GM12878 (cell line): ENCODE measurements at regions of chr15 and their contacts with region 1.

Region 1: DNA sequence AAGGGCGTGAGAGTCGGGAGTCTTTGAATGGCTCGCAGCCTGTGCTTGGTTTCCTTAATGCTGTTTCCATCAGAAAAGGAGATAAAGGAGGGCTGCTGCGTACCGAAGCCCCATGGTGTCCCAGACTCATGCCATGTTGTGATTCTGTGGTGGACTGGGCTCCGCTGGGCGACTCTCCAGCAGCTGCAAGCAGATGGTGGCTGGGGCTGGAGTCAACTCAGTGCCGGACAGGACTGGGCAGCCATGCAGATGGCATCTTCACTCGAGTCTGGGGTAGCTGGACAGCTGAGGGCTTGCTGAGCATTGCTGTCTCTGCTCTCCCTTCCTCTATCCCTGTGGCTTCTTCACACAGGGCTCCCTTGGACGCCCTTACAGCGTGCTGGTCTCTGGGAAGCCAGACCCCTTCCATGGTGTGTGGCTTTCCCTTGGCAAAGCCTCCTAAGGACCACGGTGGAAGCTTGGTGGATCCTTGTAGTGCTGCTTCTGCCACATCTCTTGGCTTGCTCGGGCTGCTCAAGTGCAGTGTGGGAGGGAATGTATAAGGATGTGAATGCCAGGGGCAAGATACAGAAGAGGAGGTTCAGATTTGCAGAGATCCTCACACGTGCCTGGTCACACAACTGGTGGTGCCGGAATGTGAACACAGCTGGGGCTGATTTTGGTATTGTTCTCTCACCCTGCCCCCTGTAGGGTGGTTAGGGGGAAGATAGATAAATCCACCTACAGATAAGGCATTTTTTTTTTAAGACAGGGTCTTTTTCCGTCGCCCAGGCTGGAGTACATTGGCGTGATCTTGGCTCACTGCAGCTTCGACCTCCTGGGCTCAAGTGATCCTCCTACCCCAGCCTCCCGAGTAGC is 9.0 kb downstream of the NIPA1 start:
- DNase-seq: no peak
- ATAC-seq: no peak
- H3K4me3 ChIP-seq: peak overlapping the region; percentile 47; the same call in 1 of the 2 replicates
- H3K27ac ChIP-seq: peak overlapping the region; percentile 98
- H3K4me1 ChIP-seq: peaks cover 31% of the 10 kb centered on the region
- H3K27me3 ChIP-seq: no peaks in the 10 kb centered on the region
- CTCF ChIP-seq: no peak
- EP300 ChIP-seq: no peak
- POLR2A ChIP-seq: no peak
- RAD21 ChIP-seq: no peak

Region 2: GRCh38 chr15:22780267-22780666 is 15.2 kb before region 1 on chr15:
- CTCF ChIA-PET with region 1: interaction called, 3 read pairs
- POLR2A ChIA-PET with region 1: interaction called, 7 read pairs
- RAD21 ChIA-PET with region 1: interaction called, 10 read pairs
- SMC1A ChIA-PET with region 1: interaction called, 5 read pairs
- in situ Hi-C with region 1: no loop called
- intact Hi-C with region 1: loop called (anchors 2 kb)
- DNase-seq: no peak
- ATAC-seq: peak; percentile 88
- H3K4me3 ChIP-seq: no peak overlapping the region
- H3K27ac ChIP-seq: no peak overlapping the region
- H3K4me1 ChIP-seq: peaks cover 30% of the 10 kb centered on the region
- H3K27me3 ChIP-seq: no peaks in the 10 kb centered on the region
- CTCF ChIP-seq: no peak
- EP300 ChIP-seq: 0 out of 4 replicates have a peak, but pooled peaks of 1 of the 2 experiments have one; percentile 19
- POLR2A ChIP-seq: no peak
- RAD21 ChIP-seq: no peak

Region 3: DNA sequence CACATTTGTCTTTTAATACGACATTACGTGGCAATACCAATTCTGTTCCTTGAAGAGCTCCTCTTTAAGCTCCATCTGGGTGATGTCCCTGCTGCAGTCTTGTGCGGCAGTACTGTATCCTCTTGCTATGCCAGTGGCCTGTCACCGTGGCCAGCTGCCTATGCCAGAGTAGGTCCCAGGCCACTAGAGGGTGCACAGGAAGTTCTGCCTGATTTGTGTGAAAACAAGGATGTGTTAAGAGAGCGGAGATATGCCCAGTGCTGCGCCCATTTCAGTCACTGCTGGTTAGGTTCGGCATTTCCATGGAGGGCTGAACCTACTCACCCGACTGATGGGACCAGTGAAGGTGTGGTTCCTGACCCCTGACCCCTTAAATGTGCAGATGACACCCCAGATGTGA is 16.2 kb after region 1 on chr15:
- CTCF ChIA-PET with region 1: interaction called, 3 read pairs
- POLR2A ChIA-PET with region 1: interaction called, 4 read pairs
- RAD21 ChIA-PET with region 1: no interaction called
- SMC1A ChIA-PET with region 1: interaction called, 18 read pairs
- in situ Hi-C with region 1: no loop called
- intact Hi-C with region 1: no loop called
- DNase-seq: no peak
- ATAC-seq: peak; percentile 56
- H3K4me3 ChIP-seq: no peak overlapping the region
- H3K27ac ChIP-seq: no peak overlapping the region
- H3K4me1 ChIP-seq: peaks cover 21% of the 10 kb centered on the region
- H3K27me3 ChIP-seq: no peaks in the 10 kb centered on the region
- CTCF ChIP-seq: peak; percentile 21 to 35 (median 34); a peak in 4 of 6 replicates
- EP300 ChIP-seq: no peak
- POLR2A ChIP-seq: no peak
- RAD21 ChIP-seq: 0 out of 2 replicates have a peak, but pooled peaks have one; percentile 11

Region 4: DNA sequence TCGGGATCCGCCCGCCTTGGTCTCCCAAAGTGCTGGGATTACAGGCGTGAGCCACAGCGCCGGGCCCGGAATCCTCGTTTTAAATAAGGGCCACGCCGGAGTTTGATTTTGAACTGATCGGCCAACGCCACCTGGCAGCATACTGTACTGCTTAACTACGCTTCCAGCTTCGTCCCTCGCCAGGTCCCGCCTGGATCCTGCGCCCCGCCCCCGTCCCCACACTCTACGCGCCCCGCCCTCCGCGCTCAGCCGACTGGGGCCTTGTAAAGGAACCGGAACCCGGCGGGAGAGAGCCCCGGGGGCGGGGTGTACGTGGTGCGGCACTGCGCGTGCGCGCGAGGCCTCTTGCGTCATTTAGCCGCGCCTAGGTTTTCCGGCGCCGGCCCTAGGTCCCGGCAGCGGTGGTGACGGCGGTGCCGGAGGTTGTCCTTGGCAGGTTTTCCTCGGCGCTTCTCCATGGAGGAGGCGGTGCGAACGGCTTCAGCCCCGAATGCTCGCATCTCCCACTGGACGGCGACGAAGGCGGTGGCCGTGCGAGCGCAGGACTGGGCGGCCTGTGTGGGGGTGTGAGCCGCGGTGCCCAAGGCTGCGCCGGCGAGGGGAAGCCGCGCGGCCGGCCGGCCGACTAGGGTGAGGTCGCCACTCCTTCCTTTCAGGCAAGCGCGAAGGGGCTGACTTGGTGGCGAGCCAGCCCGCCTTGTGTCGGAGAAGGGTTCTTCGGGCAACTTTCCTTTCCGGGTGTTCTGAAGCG is 43.0 kb after region 1 on chr15 and contains the start of gene NIPA2:
- CTCF ChIA-PET with region 1: interaction called, 9 read pairs
- POLR2A ChIA-PET with region 1: interaction called, 3 read pairs
- RAD21 ChIA-PET with region 1: interaction called, 20 read pairs
- SMC1A ChIA-PET with region 1: interaction called, 10 read pairs
- in situ Hi-C with region 1: no loop called
- intact Hi-C with region 1: loop called (anchors 2 kb)
- DNase-seq: peak; percentile 90
- ATAC-seq: peak; percentile 91
- H3K4me3 ChIP-seq: peak within 1 kb of the TSS; percentile 90
- H3K27ac ChIP-seq: peak within 1 kb of the TSS; percentile 88
- H3K4me1 ChIP-seq: peaks cover 9% of the 10 kb centered on the region
- H3K27me3 ChIP-seq: no peaks in the 10 kb centered on the region
- CTCF ChIP-seq: peak in 1 of 3 experiments; percentile 10; a peak in 2 of 6 replicates
- EP300 ChIP-seq: peak; percentile 31; a peak in 1 of 4 replicates
- POLR2A ChIP-seq: peak; percentile 94
- RAD21 ChIP-seq: no peak
- polyA plus RNA-seq, gene NIPA2: 24.4 to 36.3 TPM

Region 5: GRCh38 chr15:22878103-22878502 is 82.7 kb after region 1 on chr15:
- CTCF ChIA-PET with region 1: no interaction called
- POLR2A ChIA-PET with region 1: no interaction called
- RAD21 ChIA-PET with region 1: no interaction called
- SMC1A ChIA-PET with region 1: no interaction called
- in situ Hi-C with region 1: no loop called
- intact Hi-C with region 1: no loop called
- DNase-seq: no peak
- ATAC-seq: no peak
- H3K4me3 ChIP-seq: no peak overlapping the region
- H3K27ac ChIP-seq: no peak overlapping the region
- H3K4me1 ChIP-seq: no peaks in the 10 kb centered on the region
- H3K27me3 ChIP-seq: no peaks in the 10 kb centered on the region
- CTCF ChIP-seq: no peak
- EP300 ChIP-seq: no peak
- POLR2A ChIP-seq: no peak
- RAD21 ChIP-seq: no peak